Activated CD4-positive, alpha-beta memory T cell treated with anti-CD3 and anti-CD28 coated beads, Interleukin-2, amount 10 ng/mL, durations not matched to agents 7 days and 5 days (primary cell): ENCODE measurements at regions of chr16 and their contacts with region 1.

Region 1: GRCh38 chr16:50781043-50781442 is 39.2 kb downstream of the CYLD start:
- DNase-seq: peak; percentile 36
- H3K4me3 Mint-ChIP-seq: peak overlapping the region; percentile 56
- H3K27ac Mint-ChIP-seq: peak overlapping the region; percentile 95
- H3K4me1 Mint-ChIP-seq: peaks cover 57% of the 10 kb centered on the region
- H3K27me3 Mint-ChIP-seq: no peaks in the 10 kb centered on the region

Region 2: GRCh38 chr16:50747207-50747956 is 33.7 kb before region 1 on chr16:
- CTCF ChIA-PET with region 1: interaction called, 11 read pairs
- POLR2A ChIA-PET with region 1: interaction called, 5 read pairs
- DNase-seq: peak; percentile 35
- H3K4me3 Mint-ChIP-seq: peak overlapping the region; percentile 75
- H3K27ac Mint-ChIP-seq: peak overlapping the region; percentile 97
- H3K4me1 Mint-ChIP-seq: peaks cover 60% of the 10 kb centered on the region
- H3K27me3 Mint-ChIP-seq: no peaks in the 10 kb centered on the region

Region 3: GRCh38 chr16:50765260-50765659 is 15.8 kb before region 1 on chr16:
- CTCF ChIA-PET with region 1: interaction called, 4 read pairs
- POLR2A ChIA-PET with region 1: interaction called, 21 read pairs
- DNase-seq: no peak
- H3K4me3 Mint-ChIP-seq: no peak overlapping the region
- H3K27ac Mint-ChIP-seq: peak overlapping the region; percentile 67
- H3K4me1 Mint-ChIP-seq: peaks cover 85% of the 10 kb centered on the region
- H3K27me3 Mint-ChIP-seq: no peaks in the 10 kb centered on the region